ENCODE measurements at regions of chr9 and their contacts with region 1.

Region 1: DNA sequence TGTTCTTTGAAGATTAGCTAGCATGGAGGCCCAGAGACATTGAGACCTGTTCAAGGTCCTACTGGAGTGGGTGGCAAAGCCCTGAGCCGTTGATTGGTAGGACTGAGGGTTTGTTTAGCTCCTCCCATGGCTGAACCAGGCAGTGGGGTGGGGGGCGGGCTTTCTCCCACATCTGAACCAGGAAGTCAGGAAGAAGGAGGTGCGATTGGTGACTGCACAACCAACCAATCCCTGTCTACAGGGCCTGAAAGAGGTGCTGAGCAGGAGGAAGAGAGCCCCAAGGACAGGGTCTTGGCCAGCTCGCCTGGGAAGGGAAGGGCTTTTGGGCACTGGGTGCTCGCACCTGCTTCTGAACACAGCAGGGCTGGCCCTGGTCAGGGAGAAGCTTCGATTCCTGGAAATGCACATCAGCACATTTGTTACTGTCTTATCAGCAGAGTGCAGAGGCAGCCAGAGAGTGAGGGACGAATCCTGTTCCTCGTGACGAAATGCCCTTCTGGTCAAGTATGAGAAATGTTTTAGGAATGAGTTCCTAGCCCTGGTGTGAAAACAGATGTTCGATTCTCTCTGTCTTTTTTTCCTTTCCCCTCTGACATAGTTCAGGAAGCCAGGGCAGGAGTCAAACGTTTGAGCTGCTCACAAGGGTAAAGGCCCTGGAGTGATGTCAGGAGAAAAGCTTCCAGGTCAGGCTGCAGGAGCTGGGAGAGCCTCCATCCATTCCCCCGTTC is 294.8 kb upstream of the KLF4 start:
- DNase-seq: no peak
- ATAC-seq: no peak; the same call in 1 of the 3 replicates
- H3K4me3 ChIP-seq: no peak overlapping the region
- H3K27ac ChIP-seq: no peak overlapping the region
- H3K4me1 ChIP-seq: no peaks in the 10 kb centered on the region
- H3K27me3 ChIP-seq: no peaks in the 10 kb centered on the region
- CTCF ChIP-seq: no peak
- EP300 ChIP-seq: no peak
- POLR2A ChIP-seq: no peak
- RAD21 ChIP-seq: no peak

Region 2: GRCh38 chr9:107770725-107771124 is 13.7 kb before region 1 on chr9:
- CTCF ChIA-PET with region 1: interaction called, 3 read pairs
- POLR2A ChIA-PET with region 1: interaction called, 4 read pairs
- RAD21 ChIA-PET with region 1: interaction called, 5 read pairs
- SMC1A ChIA-PET with region 1: interaction called, 15 read pairs
- in situ Hi-C with region 1: no loop called
- intact Hi-C with region 1: no loop called
- DNase-seq: no peak
- ATAC-seq: no peak
- H3K4me3 ChIP-seq: no peak overlapping the region
- H3K27ac ChIP-seq: no peak overlapping the region
- H3K4me1 ChIP-seq: no peaks in the 10 kb centered on the region
- H3K27me3 ChIP-seq: no peaks in the 10 kb centered on the region
- CTCF ChIP-seq: no peak
- EP300 ChIP-seq: no peak
- POLR2A ChIP-seq: no peak
- RAD21 ChIP-seq: no peak

Region 3: DNA sequence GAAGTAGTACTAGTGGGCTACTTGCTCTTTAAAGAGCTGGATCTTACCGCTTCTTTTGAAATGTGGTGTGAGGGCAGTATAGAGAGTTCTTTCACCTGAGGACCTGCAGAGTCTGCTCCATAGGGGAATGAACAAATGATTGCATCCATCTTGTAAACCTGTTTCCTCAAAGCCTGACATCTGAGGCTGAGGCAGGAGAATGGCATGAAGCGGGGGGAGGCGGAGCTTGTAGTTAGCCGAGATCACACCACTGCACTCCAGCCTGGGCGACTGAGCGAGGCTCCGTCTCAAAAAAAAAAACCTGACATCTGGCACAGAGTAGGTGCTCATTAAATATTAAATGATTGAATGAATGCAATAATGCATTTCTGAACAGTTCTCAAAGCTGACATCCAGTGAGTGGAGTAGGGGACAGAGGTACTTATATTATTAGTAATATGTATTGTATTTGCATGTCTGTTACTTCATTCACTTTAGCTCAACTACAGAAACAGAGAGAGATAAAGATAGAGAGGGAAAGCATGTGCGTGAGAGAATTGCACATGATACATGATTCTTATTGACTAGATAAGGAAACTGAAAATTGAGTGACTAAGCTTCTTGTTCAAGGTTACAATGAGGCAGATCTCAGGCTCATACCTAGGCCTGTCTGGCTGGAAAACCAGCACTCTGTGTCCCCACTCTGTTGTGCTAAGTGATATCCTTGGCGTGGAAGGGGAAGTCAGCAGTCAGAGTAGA is 42.7 kb after region 1 on chr9:
- CTCF ChIA-PET with region 1: no interaction called
- POLR2A ChIA-PET with region 1: no interaction called
- RAD21 ChIA-PET with region 1: no interaction called
- SMC1A ChIA-PET with region 1: no interaction called
- in situ Hi-C with region 1: no loop called
- intact Hi-C with region 1: no loop called
- DNase-seq: peak; percentile 1
- ATAC-seq: peak; percentile 59
- H3K4me3 ChIP-seq: no peak overlapping the region
- H3K27ac ChIP-seq: no peak overlapping the region
- H3K4me1 ChIP-seq: no peaks in the 10 kb centered on the region
- H3K27me3 ChIP-seq: no peaks in the 10 kb centered on the region
- CTCF ChIP-seq: no peak
- EP300 ChIP-seq: no peak
- POLR2A ChIP-seq: no peak
- RAD21 ChIP-seq: no peak

Region 4: DNA sequence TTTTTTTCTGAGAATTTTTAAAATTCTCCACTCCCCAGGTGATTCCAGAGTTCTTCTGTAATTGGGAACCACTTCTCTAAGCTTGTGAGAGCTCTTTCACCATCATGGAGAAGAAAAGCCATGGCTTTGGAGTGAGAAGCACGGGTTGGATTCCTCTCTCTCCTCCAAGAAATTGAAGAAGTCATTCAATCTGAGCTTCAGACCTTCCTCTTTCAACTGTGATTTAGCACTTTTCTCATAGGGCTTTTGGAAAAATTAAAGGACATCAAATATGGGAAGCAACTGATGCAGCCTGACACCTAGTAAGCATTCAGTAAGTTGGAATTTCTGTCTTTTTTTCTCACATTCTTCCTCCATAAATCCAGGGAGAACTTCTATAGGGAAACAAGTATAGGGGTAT is 285.6 kb after region 1 on chr9:
- CTCF ChIA-PET with region 1: no interaction called
- POLR2A ChIA-PET with region 1: no interaction called
- RAD21 ChIA-PET with region 1: no interaction called
- SMC1A ChIA-PET with region 1: no interaction called
- in situ Hi-C with region 1: no loop called
- intact Hi-C with region 1: no loop called
- DNase-seq: no peak
- ATAC-seq: no peak
- H3K4me3 ChIP-seq: no peak overlapping the region
- H3K27ac ChIP-seq: no peak overlapping the region
- H3K4me1 ChIP-seq: no peaks in the 10 kb centered on the region
- H3K27me3 ChIP-seq: no peaks in the 10 kb centered on the region
- CTCF ChIP-seq: no peak
- EP300 ChIP-seq: no peak
- POLR2A ChIP-seq: no peak
- RAD21 ChIP-seq: no peak